Ovary (tissue), 10 donors: ENCODE measurements at regions of chr9 and their contacts with region 1.

Region 1: GRCh38 chr9:124869986-124870560 is 8.1 kb downstream of the ARPC5L start:
- DNase-seq: peak in 1 of 5 donors; percentile 52
- H3K4me3 ChIP-seq: peak overlapping the region; percentile 81
- H3K27ac ChIP-seq: peak overlapping the region in 1 of 2 donors; percentile 10
- H3K4me1 ChIP-seq: peaks cover 14% of the 10 kb centered on the region
- H3K27me3 ChIP-seq: no peaks in the 10 kb centered on the region
- CTCF ChIP-seq: no peak
- EP300 ChIP-seq: no peak
- POLR2A ChIP-seq: no peak

Region 2: GRCh38 chr9:124934290-124934689 is 64.2 kb after region 1 on chr9:
- intact Hi-C with region 1: loop called in 1 of 4 experiments (anchors 10 kb)
- DNase-seq: no peak
- H3K4me3 ChIP-seq: no peak overlapping the region
- H3K27ac ChIP-seq: no peak overlapping the region
- H3K4me1 ChIP-seq: no peaks in the 10 kb centered on the region
- H3K27me3 ChIP-seq: no peaks in the 10 kb centered on the region
- CTCF ChIP-seq: no peak
- EP300 ChIP-seq: no peak
- POLR2A ChIP-seq: no peak